Activated B cell treated with CpG ODN at 0.5 μM for 24 hours (primary cell): ENCODE measurements at regions of chr2 and their contacts with region 1.

Region 1: DNA sequence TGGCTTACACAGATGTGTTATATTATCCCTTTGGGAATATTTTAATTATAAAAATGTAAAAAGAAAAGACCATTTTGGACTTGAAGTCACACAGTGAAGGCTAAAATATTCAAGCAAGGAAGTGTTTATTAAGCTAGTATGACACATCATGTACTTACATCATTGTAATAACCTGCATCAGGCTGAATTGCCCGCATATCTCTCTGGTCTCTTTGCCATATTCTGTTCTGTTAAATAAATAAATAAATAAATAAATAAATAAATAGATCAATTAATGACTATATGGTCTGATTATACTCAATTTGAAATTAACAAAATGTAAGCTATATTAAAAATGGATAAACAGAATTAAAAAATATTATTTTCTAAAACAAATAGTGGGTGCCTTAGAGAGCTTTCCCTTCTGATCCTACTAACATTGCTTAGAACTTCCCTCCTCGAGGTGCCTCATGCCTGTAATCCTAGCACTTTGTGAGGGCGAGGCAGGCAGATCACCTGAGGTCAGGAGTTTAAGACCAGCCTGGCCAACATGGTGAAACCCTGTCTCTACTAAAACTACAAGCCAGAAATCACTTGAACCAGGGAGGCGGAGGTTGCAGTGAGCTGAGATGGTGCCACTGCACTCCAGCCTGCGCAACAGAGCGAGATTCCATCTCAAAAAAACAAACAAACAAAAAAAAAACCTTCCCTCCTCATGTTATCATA is 42.0 kb downstream of the WDR33 start:
- DNase-seq: no peak
- ATAC-seq: no peak
- H3K4me3 Mint-ChIP-seq: no peak overlapping the region
- H3K27ac Mint-ChIP-seq: peak overlapping the region; percentile 51
- H3K4me1 Mint-ChIP-seq: peaks cover 17% of the 10 kb centered on the region
- H3K27me3 Mint-ChIP-seq: no peaks in the 10 kb centered on the region
- CTCF ChIP-seq: no peak

Region 2: DNA sequence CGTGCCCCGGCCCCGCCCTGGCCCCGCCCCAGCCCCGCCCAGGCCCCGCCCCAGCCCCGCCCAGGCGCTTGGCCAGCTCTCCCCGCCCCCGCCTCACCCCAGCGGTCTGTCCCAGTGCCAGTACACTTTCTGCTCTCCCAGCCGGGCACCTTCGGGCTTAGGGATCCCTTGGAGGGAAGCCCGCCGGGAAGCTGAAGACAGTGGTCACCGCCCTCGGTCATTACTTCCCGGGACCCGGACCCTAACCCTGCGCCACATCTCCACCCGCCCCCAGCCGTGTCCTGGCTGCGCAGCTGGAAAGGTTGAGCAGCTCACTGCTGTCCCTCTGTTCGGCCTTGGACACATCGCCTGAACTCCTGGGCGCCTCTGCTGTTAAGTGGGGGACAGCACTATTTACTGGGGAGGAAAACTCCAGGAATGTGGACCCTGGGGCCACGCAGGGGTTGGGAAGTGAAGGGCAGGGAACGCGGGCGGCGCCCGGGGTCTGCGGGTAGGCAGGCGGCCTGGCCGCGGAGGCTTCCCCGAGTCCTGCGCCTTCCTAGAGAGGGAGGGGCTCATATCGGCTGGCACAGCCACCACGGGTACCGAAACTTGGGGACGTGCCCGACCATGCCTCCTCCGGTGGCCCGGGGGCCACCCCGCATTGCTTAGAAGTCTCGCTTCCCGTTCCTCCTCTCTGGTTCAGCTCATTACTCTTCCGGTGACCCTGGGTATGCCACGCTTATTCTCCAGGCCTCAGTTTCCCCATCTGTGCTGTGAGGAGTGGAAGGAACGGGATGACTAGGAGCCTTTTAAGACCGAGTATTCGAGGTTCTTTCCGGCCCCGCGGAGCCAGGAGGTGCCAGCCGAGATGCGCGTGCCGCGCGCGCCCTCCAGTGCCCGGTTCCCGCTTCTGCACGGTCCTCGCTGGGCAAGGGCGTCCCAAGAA is 992.0 kb before region 1 on chr2:
- CTCF ChIA-PET with region 1: no interaction called
- POLR2A ChIA-PET with region 1: no interaction called
- intact Hi-C with region 1: no loop called
- DNase-seq: peak; percentile 66
- ATAC-seq: peak; percentile 86
- H3K4me3 Mint-ChIP-seq: peak overlapping the region; percentile 89
- H3K27ac Mint-ChIP-seq: peak overlapping the region; percentile 35
- H3K4me1 Mint-ChIP-seq: peaks cover 12% of the 10 kb centered on the region
- H3K27me3 Mint-ChIP-seq: peaks cover 29% of the 10 kb centered on the region
- CTCF ChIP-seq: peak; percentile 94

Region 3: DNA sequence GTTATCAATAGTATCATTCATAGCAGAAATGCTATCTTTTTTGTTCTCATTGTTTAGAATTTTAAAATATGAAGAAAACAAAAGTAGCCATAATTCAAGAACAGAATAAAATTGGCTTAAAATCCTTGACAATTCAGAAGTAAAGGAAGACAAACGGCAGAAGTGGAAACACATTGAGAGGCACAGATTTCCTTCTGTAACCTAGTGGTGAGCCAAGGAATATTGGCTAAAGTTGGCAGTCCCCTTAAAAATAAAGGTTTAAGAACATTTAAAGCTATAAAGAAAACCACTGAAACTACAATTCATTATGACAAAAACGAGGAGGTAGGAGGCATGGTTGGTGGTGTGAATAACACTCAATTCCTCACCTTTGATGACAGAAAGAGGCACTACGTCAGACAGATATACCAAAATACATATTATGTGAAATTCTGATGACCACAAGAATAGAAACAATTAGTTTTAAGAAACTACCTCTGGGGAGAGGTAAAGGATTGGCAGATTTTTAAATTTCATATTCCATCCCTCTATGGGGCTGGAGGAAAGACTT is 25.4 kb before region 1 on chr2:
- CTCF ChIA-PET with region 1: no interaction called
- POLR2A ChIA-PET with region 1: no interaction called
- intact Hi-C with region 1: loop called (anchors 2 kb)
- DNase-seq: no peak
- ATAC-seq: no peak
- H3K4me3 Mint-ChIP-seq: no peak overlapping the region
- H3K27ac Mint-ChIP-seq: no peak overlapping the region
- H3K4me1 Mint-ChIP-seq: peaks cover 8% of the 10 kb centered on the region
- H3K27me3 Mint-ChIP-seq: no peaks in the 10 kb centered on the region
- CTCF ChIP-seq: no peak

Region 4: DNA sequence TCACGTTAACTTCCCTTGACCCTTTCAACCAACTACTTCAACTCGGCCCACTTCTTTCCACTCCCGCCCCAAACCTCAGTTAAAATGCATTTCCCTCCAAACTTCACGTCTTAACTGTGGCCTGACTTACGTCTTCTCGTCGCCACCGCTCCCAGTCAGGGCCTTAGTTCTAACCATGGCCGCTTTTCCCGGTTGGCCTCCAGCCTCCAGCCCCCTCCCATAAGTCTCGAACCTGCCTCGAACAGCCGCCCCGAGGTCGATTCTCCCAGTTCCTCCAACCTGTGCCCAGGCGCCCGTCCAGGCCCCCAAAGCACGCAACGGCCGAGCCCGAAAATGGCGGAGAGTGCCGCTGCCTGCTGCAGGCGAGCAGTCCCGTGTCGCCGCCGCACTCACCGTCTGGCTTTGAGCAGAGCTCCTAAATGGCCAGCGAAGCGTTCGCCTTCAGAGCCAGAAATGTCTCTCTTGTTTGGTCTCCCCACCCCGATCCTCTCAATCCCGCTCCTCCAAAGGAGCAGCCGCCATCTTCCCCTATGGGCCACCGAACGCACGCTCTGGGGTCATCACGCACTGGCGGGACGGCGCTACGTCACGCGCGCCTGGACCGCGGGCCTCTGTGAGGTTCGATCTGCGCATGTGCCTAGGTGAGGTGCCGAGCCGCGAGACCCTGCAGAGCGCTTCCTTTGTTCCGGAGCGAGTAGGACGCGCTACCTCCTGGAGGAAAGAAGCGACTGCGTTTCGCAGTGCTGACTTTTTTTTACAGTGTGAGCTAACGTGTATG is 41.9 kb after region 1 on chr2 and contains the start of gene WDR33:
- CTCF ChIA-PET with region 1: no interaction called
- POLR2A ChIA-PET with region 1: no interaction called
- intact Hi-C with region 1: no loop called
- DNase-seq: peak; percentile 88
- ATAC-seq: peak; percentile 96
- H3K4me3 Mint-ChIP-seq: peak within 1 kb of the TSS; percentile 89
- H3K27ac Mint-ChIP-seq: peak within 1 kb of the TSS; percentile 99
- H3K4me1 Mint-ChIP-seq: peaks cover 56% of the 10 kb centered on the region
- H3K27me3 Mint-ChIP-seq: no peaks in the 10 kb centered on the region
- CTCF ChIP-seq: no peak
- total RNA-seq, gene WDR33: 83.0 and 93.0 TPM in 2 replicates

Region 5: GRCh38 chr2:129318581-129319421 is 1549.9 kb after region 1 on chr2:
- CTCF ChIA-PET with region 1: no interaction called
- POLR2A ChIA-PET with region 1: no interaction called
- intact Hi-C with region 1: no loop called
- DNase-seq: no peak
- ATAC-seq: no peak
- H3K4me3 Mint-ChIP-seq: no peak overlapping the region
- H3K27ac Mint-ChIP-seq: no peak overlapping the region
- H3K4me1 Mint-ChIP-seq: no peaks in the 10 kb centered on the region
- H3K27me3 Mint-ChIP-seq: no peaks in the 10 kb centered on the region
- CTCF ChIP-seq: no peak